Activated CD4-positive, alpha-beta T cell treated with anti-CD3 and anti-CD28 coated beads for 36 hours (primary cell): ENCODE measurements at regions of chr19 and their contacts with region 1.

Region 1: DNA sequence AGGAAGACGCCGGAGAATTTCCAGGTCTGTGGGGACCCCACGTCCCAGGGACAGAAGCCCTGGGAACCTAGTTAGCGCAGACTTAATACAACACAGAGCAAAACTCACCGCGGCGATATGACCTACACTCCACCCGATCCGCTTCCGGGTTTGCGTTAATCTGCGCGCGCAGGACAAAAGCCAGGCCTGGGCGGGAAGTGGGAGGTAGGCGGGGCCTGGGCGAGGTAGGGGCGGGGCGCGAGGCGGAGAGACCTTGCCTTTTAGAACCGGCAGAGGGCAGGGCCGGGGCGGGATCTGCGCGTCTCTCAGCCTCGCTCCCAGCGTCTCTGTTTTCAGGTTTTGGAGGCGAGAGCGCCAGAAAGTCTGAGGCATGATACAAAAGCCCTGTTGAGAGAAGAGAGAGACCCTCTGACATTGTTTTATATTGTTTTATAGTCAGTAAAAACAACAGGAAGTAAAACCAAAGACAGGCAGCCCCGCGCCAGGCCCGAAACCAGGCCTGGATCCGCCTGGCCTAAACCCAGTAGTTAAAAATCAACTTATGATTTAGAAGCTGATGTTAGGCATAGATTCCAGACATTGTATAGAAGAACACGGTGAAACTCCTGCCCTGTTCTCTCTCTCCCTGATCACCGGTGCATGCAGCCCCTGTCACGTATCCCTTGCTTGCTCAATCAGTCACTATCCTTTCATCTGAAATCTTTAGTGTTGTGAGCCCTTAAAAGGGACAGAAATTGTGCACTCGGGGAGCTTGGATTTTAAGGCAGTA is at the start of gene ZNF611:
- DNase-seq: peak; percentile 100
- ATAC-seq: peak; percentile 97
- H3K4me3 Mint-ChIP-seq: peak within 1 kb of the TSS; percentile 88
- H3K27ac Mint-ChIP-seq: peak within 1 kb of the TSS; percentile 89
- H3K4me1 Mint-ChIP-seq: peaks cover 24% of the 10 kb centered on the region
- H3K27me3 Mint-ChIP-seq: no peaks in the 10 kb centered on the region
- total RNA-seq, gene ZNF611: 20.6 to 22.9 TPM

Region 2: GRCh38 chr19:52336117-52336790 is 398.8 kb before region 1 on chr19 and contains the start of gene ZNF610:
- CTCF ChIA-PET with region 1: no interaction called
- POLR2A ChIA-PET with region 1: no interaction called
- intact Hi-C with region 1: loop called in 1 of 2 experiments (anchors 1 kb)
- DNase-seq: peak; percentile 96
- ATAC-seq: peak; percentile 97
- H3K4me3 Mint-ChIP-seq: peak within 1 kb of the TSS; percentile 97
- H3K27ac Mint-ChIP-seq: peak within 1 kb of the TSS; percentile 96
- H3K4me1 Mint-ChIP-seq: peaks cover 10% of the 10 kb centered on the region
- H3K27me3 Mint-ChIP-seq: no peaks in the 10 kb centered on the region
- total RNA-seq, gene ZNF610: 2.3 to 3.3 TPM

Region 3: GRCh38 chr19:52570000-52570861 is 164.8 kb before region 1 on chr19 and contains the start of gene ZNF701:
- CTCF ChIA-PET with region 1: no interaction called
- POLR2A ChIA-PET with region 1: no interaction called
- intact Hi-C with region 1: loop called in 1 of 2 experiments (anchors 1 kb)
- DNase-seq: peak; percentile 98
- ATAC-seq: peak; percentile 99
- H3K4me3 Mint-ChIP-seq: peak within 1 kb of the TSS; percentile 88
- H3K27ac Mint-ChIP-seq: peak within 1 kb of the TSS; percentile 96
- H3K4me1 Mint-ChIP-seq: peaks cover 27% of the 10 kb centered on the region
- H3K27me3 Mint-ChIP-seq: no peaks in the 10 kb centered on the region
- total RNA-seq, gene ZNF701: 19.0 to 21.5 TPM

Region 4: DNA sequence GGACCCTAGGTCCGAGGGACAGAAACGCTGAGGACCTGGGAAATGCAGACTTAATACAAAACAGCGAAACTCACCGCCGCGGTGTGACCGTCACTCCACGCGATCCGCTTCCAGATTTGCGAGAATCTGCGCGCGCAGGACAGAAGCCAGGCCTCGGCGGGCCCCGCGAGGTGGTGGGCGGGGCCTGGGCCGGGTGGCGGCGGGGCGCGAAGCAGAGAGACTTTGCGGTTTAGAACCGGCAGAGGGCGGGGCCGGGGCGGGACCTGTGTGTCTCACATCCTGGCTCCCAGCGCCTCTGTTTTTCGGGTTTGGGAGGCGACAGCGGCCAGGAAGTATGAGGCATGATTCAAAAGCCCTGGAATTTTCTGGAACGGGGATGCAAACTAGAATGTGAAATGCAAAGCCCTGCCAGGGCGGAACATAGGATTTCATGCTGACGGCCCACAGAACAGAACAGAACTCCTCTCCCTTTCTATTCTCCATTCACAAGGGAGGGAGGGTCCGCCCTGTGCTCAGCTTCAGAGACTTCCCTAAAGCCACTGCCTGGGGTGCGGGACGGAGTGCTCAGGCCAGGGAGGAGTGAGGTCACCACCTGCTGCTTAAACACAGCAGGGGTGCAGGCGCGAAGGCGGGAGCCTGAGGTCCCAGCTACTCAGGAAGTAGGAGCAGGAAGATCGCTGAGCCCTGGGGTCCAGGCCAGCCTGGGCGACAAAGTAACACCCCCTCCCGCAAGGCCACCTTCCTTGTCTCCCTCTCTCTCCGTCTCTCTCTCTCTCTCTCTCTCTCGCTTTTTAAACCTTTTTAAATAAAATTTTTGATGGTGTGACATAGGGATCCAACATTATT is 44.5 kb before region 1 on chr19:
- CTCF ChIA-PET with region 1: no interaction called
- POLR2A ChIA-PET with region 1: no interaction called
- intact Hi-C with region 1: loop called (anchors 1 to 2 kb)
- DNase-seq: peak; percentile 96
- ATAC-seq: peak; percentile 95
- H3K4me3 Mint-ChIP-seq: peak overlapping the region; percentile 90
- H3K27ac Mint-ChIP-seq: peak overlapping the region; percentile 96
- H3K4me1 Mint-ChIP-seq: peaks cover 27% of the 10 kb centered on the region
- H3K27me3 Mint-ChIP-seq: no peaks in the 10 kb centered on the region

Region 5: GRCh38 chr19:52722062-52723003 is 12.7 kb before region 1 on chr19:
- CTCF ChIA-PET with region 1: no interaction called
- POLR2A ChIA-PET with region 1: no interaction called
- intact Hi-C with region 1: no loop called
- DNase-seq: no peak
- ATAC-seq: no peak
- H3K4me3 Mint-ChIP-seq: no peak overlapping the region
- H3K27ac Mint-ChIP-seq: no peak overlapping the region
- H3K4me1 Mint-ChIP-seq: peaks cover 3% of the 10 kb centered on the region
- H3K27me3 Mint-ChIP-seq: no peaks in the 10 kb centered on the region

Region 6: DNA sequence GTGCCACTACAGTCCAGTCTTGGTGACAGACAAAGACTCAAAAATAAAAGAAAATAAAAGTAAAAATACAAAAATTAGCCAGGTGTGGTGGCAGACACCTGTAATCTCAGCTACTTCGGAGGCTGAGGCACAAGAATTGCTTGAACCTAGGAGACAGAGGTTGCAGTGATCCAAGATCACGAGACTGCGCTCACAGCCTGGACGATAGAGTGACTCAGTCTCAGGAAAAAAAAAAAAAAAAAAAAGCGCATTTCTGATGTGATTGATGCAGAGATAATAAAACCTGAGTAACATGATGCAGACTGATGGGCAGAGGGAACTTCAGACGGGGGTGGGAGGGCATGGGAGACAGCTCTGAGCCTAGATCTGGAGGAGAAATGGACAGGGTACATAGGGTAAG is 26.6 kb after region 1 on chr19:
- CTCF ChIA-PET with region 1: no interaction called
- POLR2A ChIA-PET with region 1: no interaction called
- intact Hi-C with region 1: no loop called
- DNase-seq: no peak
- ATAC-seq: no peak
- H3K4me3 Mint-ChIP-seq: no peak overlapping the region
- H3K27ac Mint-ChIP-seq: no peak overlapping the region
- H3K4me1 Mint-ChIP-seq: no peaks in the 10 kb centered on the region
- H3K27me3 Mint-ChIP-seq: no peaks in the 10 kb centered on the region

Region 7: GRCh38 chr19:52897144-52897935 is 162.3 kb after region 1 on chr19 and contains the start of gene ZNF320:
- CTCF ChIA-PET with region 1: no interaction called
- POLR2A ChIA-PET with region 1: no interaction called
- intact Hi-C with region 1: loop called in 1 of 2 experiments (anchors 1 kb)
- DNase-seq: peak; percentile 98
- ATAC-seq: peak; percentile 100
- H3K4me3 Mint-ChIP-seq: peak within 1 kb of the TSS; percentile 88
- H3K27ac Mint-ChIP-seq: peak within 1 kb of the TSS; percentile 93
- H3K4me1 Mint-ChIP-seq: peaks cover 31% of the 10 kb centered on the region
- H3K27me3 Mint-ChIP-seq: no peaks in the 10 kb centered on the region
- total RNA-seq, gene ZNF320: 10.8 to 12.2 TPM

Region 8: DNA sequence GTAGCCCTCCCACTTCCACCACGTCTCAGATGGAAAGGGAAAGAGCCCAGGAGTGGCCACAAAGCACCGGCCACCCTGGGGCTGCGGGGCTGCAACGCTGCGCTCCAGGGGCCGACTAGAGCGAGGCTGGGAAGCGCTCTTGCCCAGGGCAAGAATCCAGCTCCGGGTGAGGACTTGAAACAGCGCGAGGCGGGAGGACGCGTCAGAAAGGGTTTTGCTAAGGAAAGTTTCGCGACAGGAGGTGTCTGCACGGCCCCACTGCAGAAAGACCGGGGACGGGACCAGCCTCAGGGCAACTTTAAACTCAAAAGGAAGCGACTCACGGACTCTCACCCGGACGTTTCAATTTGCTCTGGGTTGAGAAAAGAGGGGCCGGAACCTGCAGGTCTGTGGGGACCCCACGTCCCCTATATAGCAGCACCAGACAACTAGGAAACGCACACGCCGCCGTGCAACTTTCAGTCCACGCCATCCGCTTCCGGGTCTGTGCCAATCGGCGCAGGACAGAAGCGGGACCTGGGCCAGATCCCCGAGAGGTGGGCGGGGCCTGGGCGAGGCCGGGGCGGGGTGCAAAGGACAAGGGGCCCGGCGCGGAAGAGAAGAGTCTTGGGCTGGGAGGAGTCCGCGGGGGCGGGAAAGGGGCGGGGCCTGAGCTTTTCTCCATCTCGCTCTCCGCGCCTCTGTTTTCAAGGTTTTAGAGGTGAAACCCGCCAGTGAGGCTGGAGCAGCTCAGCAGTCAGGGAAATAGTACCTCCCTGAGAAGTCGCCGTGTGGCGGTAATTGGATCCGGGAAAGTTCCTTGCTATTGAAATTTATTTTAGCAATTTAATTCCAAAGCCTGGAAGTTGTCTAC is 227.5 kb after region 1 on chr19 and contains the start of gene ZNF816:
- CTCF ChIA-PET with region 1: no interaction called
- POLR2A ChIA-PET with region 1: no interaction called
- intact Hi-C with region 1: loop called in 1 of 2 experiments (anchors 1 kb)
- DNase-seq: peak; percentile 100
- ATAC-seq: peak; percentile 100
- H3K4me3 Mint-ChIP-seq: peak within 1 kb of the TSS; percentile 96
- H3K27ac Mint-ChIP-seq: peak within 1 kb of the TSS; percentile 96
- H3K4me1 Mint-ChIP-seq: peaks cover 26% of the 10 kb centered on the region
- H3K27me3 Mint-ChIP-seq: no peaks in the 10 kb centered on the region
- total RNA-seq, gene ZNF816: 10.7 to 11.4 TPM

Region 9: GRCh38 chr19:53394974-53395839 is 660.1 kb after region 1 on chr19 and contains the start of gene ZNF765:
- CTCF ChIA-PET with region 1: no interaction called
- POLR2A ChIA-PET with region 1: no interaction called
- intact Hi-C with region 1: loop called in 1 of 2 experiments (anchors 1 kb)
- DNase-seq: peak; percentile 98
- ATAC-seq: peak; percentile 99
- H3K4me3 Mint-ChIP-seq: peak within 1 kb of the TSS; percentile 84
- H3K27ac Mint-ChIP-seq: peak within 1 kb of the TSS; percentile 89
- H3K4me1 Mint-ChIP-seq: peaks cover 25% of the 10 kb centered on the region
- H3K27me3 Mint-ChIP-seq: no peaks in the 10 kb centered on the region
- total RNA-seq, gene ZNF765: 10.7 to 10.9 TPM